Aorta (tissue), 5 donors: ENCODE measurements at regions of chr3 and their contacts with region 1.

Region 1: GRCh38 chr3:126134219-126134975 is 46.0 kb downstream of the ALDH1L1 start:
- DNase-seq: peak; percentile 68 to 87
- ATAC-seq: peak; percentile 72
- H3K4me3 ChIP-seq: no peak overlapping the region
- H3K27ac ChIP-seq: no peak overlapping the region
- H3K4me1 ChIP-seq: no peaks in the 10 kb centered on the region
- H3K27me3 ChIP-seq: no peaks in the 10 kb centered on the region

Region 2: GRCh38 chr3:126197854-126198584 is 63.6 kb after region 1 on chr3:
- intact Hi-C with region 1: loop called (anchors 5 kb)
- DNase-seq: peak; percentile 79 to 88
- ATAC-seq: peak; percentile 89
- H3K4me3 ChIP-seq: no peak overlapping the region
- H3K27ac ChIP-seq: no peak overlapping the region
- H3K4me1 ChIP-seq: no peaks in the 10 kb centered on the region
- H3K27me3 ChIP-seq: no peaks in the 10 kb centered on the region

Region 3: DNA sequence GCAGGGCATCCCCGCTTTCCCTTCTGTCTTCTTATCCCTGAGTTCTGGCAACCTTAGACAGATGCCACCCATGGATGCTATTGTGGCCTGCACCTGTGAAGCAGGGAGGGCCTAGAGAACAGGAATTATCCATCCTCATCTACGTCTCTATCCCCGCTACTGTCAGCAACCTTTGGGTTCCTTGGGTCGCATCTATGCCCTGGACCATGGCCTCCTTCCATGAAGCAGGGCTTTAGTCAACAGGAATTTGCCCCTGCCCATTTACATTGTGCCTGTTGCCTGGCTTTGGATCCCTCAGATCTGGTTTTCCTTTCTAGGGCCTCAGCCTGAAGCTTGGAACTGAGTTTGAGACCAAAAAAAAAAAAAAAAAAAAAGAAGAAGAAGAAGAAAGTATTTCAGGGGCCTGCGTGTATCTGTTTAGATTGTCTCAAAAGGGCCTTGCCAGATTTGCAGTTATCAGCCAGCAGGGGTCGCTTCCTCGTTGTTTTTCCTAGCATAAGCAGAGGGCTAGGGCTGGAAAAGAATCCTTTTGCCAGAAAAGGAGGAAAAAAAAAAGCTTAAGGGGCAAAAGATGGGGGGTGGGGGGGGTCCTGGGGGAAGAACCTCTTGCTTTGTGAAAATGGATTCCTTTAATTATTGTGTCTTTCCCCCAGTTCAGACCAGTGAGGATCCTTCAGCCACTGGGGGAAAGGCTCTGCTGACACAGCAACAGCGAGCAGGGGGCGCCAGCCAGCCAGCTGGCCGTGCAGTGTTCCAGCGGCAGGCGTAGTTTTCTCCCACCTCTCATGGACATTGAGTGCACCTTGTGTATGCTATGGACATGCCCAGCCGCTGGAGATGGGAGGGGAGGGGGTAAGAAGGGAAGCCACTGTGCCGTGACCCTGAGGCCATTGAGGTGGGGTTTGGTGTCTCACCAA is 111.7 kb after region 1 on chr3:
- intact Hi-C with region 1: loop called (anchors 5 kb)
- DNase-seq: peak in 1 of 2 donors; percentile 79
- ATAC-seq: peak; percentile 76
- H3K4me3 ChIP-seq: no peak overlapping the region
- H3K27ac ChIP-seq: no peak overlapping the region
- H3K4me1 ChIP-seq: no peaks in the 10 kb centered on the region
- H3K27me3 ChIP-seq: no peaks in the 10 kb centered on the region

Region 4: DNA sequence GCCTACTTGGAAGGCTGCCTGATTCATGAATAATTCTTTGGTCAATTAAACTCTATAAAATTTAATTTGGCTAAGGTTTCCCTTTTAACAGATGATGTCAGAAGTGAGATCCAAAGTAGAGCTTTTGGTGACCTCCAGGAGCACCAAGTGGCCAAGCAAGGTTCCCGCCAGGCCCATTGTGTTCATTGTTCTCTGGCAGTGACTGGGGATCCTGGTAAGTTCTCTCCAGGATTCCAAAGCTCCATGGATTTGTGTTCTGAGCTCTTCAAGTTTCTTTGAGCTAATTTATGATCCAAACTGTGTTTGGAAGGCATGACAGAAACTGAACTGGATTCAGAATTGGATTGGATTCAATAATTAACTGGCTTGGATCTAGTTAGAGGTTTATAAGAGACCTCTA is 118.0 kb after region 1 on chr3:
- intact Hi-C with region 1: loop called (anchors 5 kb)
- DNase-seq: no peak
- ATAC-seq: no peak
- H3K4me3 ChIP-seq: no peak overlapping the region
- H3K27ac ChIP-seq: no peak overlapping the region
- H3K4me1 ChIP-seq: no peaks in the 10 kb centered on the region
- H3K27me3 ChIP-seq: no peaks in the 10 kb centered on the region

Region 5: DNA sequence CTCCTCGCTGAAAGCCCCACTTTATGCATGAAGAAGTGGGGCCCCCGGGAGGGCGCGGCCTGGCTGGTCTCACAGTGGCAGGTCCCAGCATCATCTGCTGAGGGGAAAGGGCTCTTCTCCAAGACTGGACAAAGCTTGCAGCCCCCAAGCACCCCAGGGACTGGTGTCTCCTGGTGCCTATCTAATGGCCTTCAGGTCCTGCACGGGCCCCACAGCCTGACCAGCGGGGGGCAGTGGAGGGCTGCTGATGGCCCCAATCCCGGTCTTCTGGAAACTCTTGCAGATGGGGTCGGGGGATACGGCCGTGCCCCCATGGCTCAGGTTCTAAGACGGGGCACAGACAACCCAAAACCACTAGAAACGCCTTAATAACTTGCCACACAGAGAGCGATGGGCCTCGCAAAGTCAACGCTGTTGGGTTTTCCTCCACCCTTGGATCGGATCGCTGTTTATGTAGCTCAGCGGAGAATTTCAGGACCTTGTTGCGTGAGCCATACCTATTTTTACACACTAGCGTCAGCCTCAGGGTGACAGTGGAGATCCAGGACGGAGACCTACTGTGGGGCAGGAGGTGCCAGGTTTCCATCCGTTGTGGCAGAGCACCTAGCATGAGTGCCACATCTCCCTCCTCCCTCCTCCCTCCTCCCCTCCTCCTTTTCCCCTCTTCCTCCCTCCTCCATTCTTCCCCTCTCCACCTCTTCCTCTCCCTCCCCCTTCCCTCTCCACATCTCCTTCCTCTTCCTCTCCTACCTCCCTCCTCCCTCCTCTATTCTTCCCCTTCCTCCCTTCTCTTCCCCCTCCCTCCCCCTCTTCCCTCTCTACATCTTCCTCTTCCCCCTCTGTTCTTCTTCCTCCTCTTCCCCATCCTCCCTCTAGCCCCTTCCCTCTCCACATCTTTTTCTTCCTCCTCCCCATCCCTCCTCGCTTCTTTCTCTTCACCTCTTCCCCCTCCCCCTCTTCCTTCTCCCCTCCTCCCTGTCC is 125.3 kb after region 1 on chr3:
- intact Hi-C with region 1: loop called (anchors 5 kb)
- DNase-seq: peak; percentile 76 to 87
- ATAC-seq: peak; percentile 85
- H3K4me3 ChIP-seq: no peak overlapping the region
- H3K27ac ChIP-seq: peak overlapping the region in 1 of 2 donors; percentile 59
- H3K4me1 ChIP-seq: no peaks in the 10 kb centered on the region
- H3K27me3 ChIP-seq: no peaks in the 10 kb centered on the region

Region 6: DNA sequence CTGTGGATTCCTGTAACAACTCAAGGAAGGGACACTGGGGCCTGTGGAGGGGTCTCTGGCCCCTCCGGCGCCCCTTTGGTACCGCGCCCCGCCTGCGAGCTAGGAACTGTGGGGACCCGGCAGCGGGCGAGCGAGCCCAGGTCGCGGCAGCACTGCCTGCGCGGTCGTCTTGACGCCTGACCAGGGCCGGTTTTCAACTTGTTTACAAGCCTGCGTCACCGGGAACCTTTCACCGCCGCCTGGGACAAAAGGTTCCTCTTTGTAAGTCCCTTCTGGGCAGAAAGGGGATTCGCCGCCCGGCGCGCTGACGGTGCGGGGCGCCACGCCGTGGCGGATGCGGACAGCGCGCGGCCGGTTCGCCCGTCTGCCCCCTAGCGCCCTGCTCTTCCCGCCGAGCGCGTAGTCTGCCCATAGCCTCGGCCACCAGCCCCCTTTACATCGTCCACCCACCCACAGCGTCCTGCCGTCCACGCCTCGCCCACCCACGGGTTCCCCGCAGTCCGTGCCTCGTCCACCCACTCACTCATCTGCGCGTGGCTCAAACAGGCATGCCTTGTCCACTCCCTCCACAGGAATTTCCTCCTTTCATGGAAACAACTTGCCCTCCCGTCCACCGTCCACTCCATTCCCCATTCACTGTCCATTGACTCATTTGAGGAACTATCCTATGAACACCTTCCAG is 254.9 kb after region 1 on chr3:
- intact Hi-C with region 1: loop called (anchors 2 kb)
- DNase-seq: peak; percentile 94 to 96
- ATAC-seq: peak; percentile 96
- H3K4me3 ChIP-seq: no peak overlapping the region
- H3K27ac ChIP-seq: peak overlapping the region; percentile 14 to 73
- H3K4me1 ChIP-seq: no peaks in the 10 kb centered on the region
- H3K27me3 ChIP-seq: no peaks in the 10 kb centered on the region